ENCODE measurements at regions of chr12 and their contacts with region 1.

Region 1: GRCh38 chr12:123782997-123783792 is 21.1 kb downstream of the DNAH10 start:
- DNase-seq: no peak
- H3K4me3 ChIP-seq: no peak overlapping the region
- H3K27ac ChIP-seq: no peak overlapping the region
- H3K4me1 ChIP-seq: no peaks in the 10 kb centered on the region
- H3K27me3 ChIP-seq: no peaks in the 10 kb centered on the region
- CTCF ChIP-seq: no peak

Region 2: DNA sequence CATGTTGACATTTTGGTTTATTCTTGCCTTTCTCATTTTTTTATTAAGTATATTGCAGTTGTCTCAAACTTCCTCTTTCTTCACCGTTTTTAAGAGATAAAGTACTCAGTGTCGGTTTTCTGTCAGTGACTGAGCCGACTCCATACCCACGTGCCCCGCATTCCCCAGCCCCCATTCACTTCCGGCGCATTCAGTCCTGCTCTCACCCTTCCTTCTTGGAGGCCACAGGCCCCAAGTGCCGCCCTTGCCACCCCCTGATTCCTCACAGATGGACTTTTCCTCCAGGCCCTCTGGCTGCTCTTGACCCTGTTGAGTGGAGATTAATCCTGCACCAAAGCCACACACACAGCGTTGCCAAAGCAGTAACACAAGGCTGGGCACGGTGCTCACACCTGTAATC is 40.2 kb before region 1 on chr12:
- CTCF ChIA-PET with region 1: no interaction called
- dilution Hi-C with region 1: loop called (anchors 5 kb)
- in situ Hi-C with region 1: no loop called
- intact Hi-C with region 1: no loop called
- DNase-seq: no peak
- H3K4me3 ChIP-seq: no peak overlapping the region
- H3K27ac ChIP-seq: no peak overlapping the region
- H3K4me1 ChIP-seq: no peaks in the 10 kb centered on the region
- H3K27me3 ChIP-seq: no peaks in the 10 kb centered on the region
- CTCF ChIP-seq: no peak

Region 3: DNA sequence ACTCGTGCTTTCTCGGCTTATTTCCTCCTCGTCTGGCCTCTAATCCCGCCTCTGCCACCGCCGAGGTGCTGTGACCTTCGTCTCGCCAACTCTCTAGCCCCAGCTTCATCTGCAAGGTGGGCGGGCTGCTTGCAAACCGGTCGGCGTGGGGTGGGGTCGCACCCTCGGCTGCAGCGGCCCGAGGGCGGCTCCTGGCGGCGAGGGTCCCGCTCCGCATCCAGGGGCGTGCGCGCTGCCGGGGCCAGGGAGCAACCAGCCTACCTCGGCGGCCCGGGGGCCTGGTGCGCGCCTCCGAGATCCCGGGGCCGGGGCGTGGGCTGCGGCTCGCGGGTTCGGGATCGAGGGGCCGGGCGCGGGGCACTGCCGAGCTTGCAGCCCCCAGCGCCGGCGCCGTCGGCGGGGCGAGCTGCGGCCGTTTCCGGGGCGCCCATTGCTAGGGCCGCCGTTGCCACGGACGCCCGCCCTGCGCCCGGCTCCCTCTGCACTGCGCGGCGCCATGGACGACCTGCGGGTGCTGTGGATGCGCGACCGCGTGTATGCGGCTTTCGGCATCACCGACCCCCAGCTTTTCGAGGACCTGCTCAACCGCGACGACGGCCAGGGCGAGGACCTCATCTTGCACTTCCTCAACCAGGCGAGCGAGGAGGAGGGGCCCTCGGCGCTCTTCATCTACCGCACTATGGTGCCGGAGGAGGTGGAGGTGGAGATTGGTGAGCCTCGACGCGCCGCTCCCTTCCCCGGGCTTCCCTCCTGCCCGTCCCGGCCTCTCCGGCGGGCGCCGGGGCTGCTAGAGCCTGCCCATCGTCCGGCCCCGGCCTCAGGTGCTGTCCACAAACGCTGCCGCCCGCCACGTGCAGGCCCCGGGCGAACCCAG is 21.1 kb before region 1 on chr12 and contains the start of gene DNAH10:
- CTCF ChIA-PET with region 1: no interaction called
- dilution Hi-C with region 1: no loop called
- in situ Hi-C with region 1: no loop called
- intact Hi-C with region 1: no loop called
- DNase-seq: no peak
- H3K4me3 ChIP-seq: peak within 1 kb of the TSS; percentile 19 to 51 (median 39)
- H3K27ac ChIP-seq: no peak within 1 kb of the TSS
- H3K4me1 ChIP-seq: peaks cover 9% of the 10 kb centered on the region
- H3K27me3 ChIP-seq: peaks cover 2% of the 10 kb centered on the region
- CTCF ChIP-seq: no peak
- total RNA-seq, gene DNAH10: 0.50 to 0.96 TPM

Region 4: DNA sequence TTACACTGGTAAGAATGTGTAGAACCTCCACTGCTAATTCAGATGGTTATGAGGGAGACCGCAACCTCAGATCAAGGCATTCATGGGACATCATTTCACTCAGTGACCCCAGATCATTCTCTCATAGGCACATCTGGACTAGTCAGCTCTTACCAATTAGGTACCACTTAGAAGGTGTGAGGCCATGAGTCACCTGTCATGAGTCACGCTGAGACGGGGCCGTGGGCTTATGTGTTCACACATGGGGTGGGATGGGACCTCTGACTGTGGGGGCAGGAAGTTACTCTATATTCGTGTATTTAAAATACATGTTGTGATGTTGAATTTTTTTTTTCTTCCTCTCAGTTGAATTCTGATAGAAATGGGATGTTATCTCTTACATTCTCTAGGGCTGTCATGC is 133.5 kb after region 1 on chr12:
- CTCF ChIA-PET with region 1: no interaction called
- dilution Hi-C with region 1: no loop called
- in situ Hi-C with region 1: no loop called
- intact Hi-C with region 1: no loop called
- DNase-seq: peak; percentile 43
- H3K4me3 ChIP-seq: no peak overlapping the region
- H3K27ac ChIP-seq: no peak overlapping the region
- H3K4me1 ChIP-seq: peaks cover 4% of the 10 kb centered on the region
- H3K27me3 ChIP-seq: no peaks in the 10 kb centered on the region
- CTCF ChIP-seq: no peak

Measured in mammary epithelial cell (primary cell).